Activated CD4-positive, alpha-beta memory T cell treated with anti-CD3 and anti-CD28 coated beads for 36 hours (primary cell): ENCODE measurements at regions of chr7 and their contacts with region 1.

Region 1: DNA sequence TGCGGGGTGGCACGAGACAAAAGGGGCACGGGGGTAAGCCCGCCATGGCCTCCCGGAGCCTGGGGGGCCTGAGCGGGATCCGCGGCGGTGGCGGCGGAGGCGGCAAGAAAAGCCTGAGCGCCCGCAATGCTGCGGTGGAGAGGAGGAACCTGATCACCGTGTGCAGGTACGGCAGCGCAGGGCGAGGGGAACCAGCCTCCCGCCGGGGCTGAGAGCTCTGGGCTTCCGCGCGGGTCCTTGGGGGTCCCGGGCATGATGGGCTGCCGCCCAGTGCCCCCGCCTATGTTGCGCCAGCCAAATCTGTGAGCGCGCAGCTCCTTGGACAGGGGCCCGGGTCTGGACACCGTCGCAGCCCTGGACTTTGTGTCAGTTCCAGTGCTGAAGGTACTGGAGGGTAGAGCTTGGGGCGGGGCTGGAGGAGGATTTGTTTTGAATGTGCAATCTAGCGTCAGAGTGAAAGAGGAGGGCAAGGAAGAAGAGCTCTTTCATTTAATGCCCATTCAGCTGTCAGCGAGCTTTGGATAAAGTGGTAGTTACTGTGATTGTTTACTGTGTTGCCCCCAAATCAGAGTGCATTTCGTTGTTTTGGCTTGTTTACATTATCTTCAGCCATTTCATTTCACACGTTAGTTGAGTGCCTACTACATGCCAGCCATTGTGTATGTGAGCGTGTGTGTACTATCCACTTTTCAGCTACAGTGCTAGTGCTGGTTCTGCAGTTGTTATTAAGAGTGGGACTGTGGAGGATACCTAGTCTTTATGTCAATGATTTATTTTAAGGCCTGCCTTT is 777 bp downstream of the RUNDC3B start:
- DNase-seq: peak; percentile 35
- H3K4me3 Mint-ChIP-seq: peak overlapping the region; percentile 74
- H3K27ac Mint-ChIP-seq: no peak overlapping the region
- H3K4me1 Mint-ChIP-seq: peaks cover 9% of the 10 kb centered on the region
- H3K27me3 Mint-ChIP-seq: peaks cover 14% of the 10 kb centered on the region

Region 2: GRCh38 chr7:87600130-87601124 is 28.5 kb before region 1 on chr7 and contains the start of gene ABCB1:
- CTCF ChIA-PET with region 1: no interaction called
- POLR2A ChIA-PET with region 1: interaction called, 5 read pairs
- intact Hi-C with region 1: loop called (anchors 1 kb)
- DNase-seq: peak; percentile 61
- H3K4me3 Mint-ChIP-seq: peak within 1 kb of the TSS; percentile 79
- H3K27ac Mint-ChIP-seq: peak within 1 kb of the TSS; percentile 19
- H3K4me1 Mint-ChIP-seq: peaks cover 22% of the 10 kb centered on the region
- H3K27me3 Mint-ChIP-seq: peaks cover 38% of the 10 kb centered on the region
- total RNA-seq, gene ABCB1: 4.7 to 5.4 TPM

Region 3: DNA sequence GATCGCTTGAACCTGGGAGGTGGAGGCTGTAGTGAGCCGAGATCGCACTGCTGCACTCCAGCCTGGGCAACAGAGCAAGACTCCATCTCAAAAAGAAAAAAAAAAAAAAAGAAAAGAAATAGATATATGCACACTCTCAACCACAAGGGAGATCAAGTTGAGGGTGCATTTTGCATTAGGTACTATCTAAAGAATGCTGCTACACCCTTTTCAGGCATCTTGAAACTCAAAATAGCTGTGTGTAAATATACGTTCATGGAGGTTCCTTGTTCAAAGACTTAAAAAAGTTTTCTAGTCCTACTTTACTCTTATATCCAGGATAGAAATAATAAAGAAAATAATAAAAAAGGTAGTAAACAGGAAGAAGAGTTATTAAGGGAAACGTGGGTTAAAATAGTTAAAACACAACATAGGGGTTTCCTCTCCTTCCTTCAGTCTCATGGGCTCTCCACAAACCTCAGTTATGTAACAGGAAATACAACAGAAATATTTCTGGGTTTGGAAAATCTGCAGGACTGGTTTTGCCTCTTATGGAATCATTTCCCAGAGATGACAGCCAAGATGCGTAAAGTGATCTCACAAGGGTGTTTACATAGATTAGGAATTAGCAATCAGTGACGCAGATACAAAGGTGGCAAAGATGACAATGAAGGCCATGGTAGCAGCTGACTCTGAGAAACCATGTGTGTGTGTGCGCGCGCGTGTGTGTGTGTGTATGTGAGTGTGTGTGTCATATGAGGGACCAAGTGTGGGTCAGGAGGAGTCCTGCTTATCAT is 662.6 kb after region 1 on chr7:
- CTCF ChIA-PET with region 1: no interaction called
- POLR2A ChIA-PET with region 1: no interaction called
- intact Hi-C with region 1: no loop called
- DNase-seq: no peak
- H3K4me3 Mint-ChIP-seq: no peak overlapping the region
- H3K27ac Mint-ChIP-seq: no peak overlapping the region
- H3K4me1 Mint-ChIP-seq: no peaks in the 10 kb centered on the region
- H3K27me3 Mint-ChIP-seq: peaks cover 3% of the 10 kb centered on the region